GM12878 (cell line): ENCODE measurements at regions of chr21 and their contacts with region 1.

Region 1: DNA sequence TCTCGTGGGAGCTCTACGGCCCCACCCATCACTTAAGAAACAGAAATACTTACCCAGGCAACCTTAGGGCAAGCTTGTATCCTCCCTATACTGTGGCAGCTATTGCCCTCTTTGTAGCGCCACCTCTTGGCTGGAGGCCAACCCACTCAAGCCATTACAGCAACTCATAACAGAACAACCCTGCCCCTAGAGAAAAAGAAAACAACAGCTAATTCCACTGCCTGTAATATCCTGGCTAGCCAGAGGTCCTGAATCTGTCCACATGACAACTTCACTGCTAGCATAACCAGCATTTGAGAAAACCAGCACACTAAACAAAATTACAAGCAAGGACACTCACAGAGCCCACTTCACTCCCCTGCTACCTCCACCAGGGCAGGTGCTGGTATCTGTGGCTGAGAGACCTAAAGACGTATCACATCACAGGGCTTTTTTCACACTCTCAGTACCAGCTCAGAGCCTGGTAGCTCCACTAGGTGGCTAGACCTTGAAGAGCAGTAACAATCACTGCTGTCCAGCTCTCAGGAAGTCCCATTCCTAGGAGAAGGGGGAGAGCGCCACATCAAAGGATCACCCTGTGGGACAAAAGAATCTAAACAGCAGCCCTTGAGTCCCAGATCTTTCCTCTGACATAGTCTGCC is 14.5 kb upstream of the MX1 start:
- DNase-seq: peak; percentile 40
- ATAC-seq: peak; percentile 95
- H3K4me3 ChIP-seq: no peak overlapping the region
- H3K27ac ChIP-seq: no peak overlapping the region
- H3K4me1 ChIP-seq: no peaks in the 10 kb centered on the region; the same call in 1 of the 2 replicates
- H3K27me3 ChIP-seq: no peaks in the 10 kb centered on the region
- CTCF ChIP-seq: peak; percentile 14 to 34 (median 19); a peak in 3 of 6 replicates
- EP300 ChIP-seq: no peak
- POLR2A ChIP-seq: no peak
- RAD21 ChIP-seq: no peak

Region 2: DNA sequence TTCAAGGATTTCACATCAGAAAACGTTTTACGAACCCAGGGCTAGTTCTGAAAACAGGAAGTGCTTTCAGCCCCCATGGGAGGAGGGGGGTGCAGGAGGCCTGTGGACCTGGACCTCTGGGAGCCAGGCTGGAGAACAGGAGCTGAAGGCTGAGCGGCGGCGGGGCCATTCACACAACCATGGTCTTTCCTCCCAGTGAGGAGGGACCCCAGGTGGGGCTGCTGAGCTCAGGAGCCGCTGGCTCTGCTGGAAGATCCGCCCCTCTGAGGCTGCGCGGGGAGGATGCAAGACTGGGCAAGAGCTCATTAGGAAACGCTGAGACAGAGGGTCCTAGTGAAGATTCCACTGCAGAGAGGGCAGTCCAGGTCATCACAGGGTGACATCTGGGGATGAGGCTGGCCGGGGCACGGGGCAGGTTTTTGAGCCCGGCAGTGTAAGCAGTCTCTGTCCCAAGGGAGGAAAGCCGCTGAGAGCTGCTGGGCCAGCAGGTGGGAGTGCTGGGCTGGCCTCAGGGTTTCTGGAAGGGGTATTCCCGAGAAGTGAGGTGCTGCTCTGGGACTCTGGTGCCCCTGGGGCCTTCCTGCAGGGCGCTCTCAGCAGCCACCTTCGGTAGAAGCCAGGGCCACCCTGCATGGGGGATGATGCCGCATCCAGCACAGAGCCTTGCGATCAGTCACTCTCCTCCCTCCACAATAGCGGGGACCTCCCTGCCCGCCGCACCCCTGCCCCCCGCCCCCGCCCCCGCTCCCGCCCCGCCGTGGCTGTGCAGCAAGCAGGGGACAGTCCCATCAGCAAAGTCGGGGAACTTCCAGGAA is 42.3 kb before region 1 on chr21:
- CTCF ChIA-PET with region 1: interaction called, 20 read pairs
- POLR2A ChIA-PET with region 1: interaction called, 5 read pairs
- RAD21 ChIA-PET with region 1: interaction called, 42 read pairs
- SMC1A ChIA-PET with region 1: interaction called, 62 read pairs
- in situ Hi-C with region 1: no loop called
- intact Hi-C with region 1: no loop called
- DNase-seq: peak; percentile 42
- ATAC-seq: peak; percentile 47
- H3K4me3 ChIP-seq: peak overlapping the region; percentile 78
- H3K27ac ChIP-seq: peak overlapping the region; percentile 98
- H3K4me1 ChIP-seq: peaks cover 42% of the 10 kb centered on the region
- H3K27me3 ChIP-seq: no peaks in the 10 kb centered on the region
- CTCF ChIP-seq: peak; percentile 24 to 60 (median 25); a peak in 4 of 6 replicates
- EP300 ChIP-seq: no peak
- POLR2A ChIP-seq: peak; percentile 70
- RAD21 ChIP-seq: peak; percentile 41

Region 3: GRCh38 chr21:41374867-41375533 is 36.6 kb before region 1 on chr21:
- CTCF ChIA-PET with region 1: interaction called, 20 read pairs
- POLR2A ChIA-PET with region 1: interaction called, 5 read pairs
- RAD21 ChIA-PET with region 1: interaction called, 42 read pairs
- SMC1A ChIA-PET with region 1: interaction called, 62 read pairs
- in situ Hi-C with region 1: no loop called
- intact Hi-C with region 1: no loop called
- DNase-seq: no peak
- ATAC-seq: peak; percentile 52
- H3K4me3 ChIP-seq: no peak overlapping the region
- H3K27ac ChIP-seq: no peak overlapping the region
- H3K4me1 ChIP-seq: peaks cover 6% of the 10 kb centered on the region; the same call in 1 of the 2 replicates
- H3K27me3 ChIP-seq: no peaks in the 10 kb centered on the region
- CTCF ChIP-seq: no peak
- EP300 ChIP-seq: no peak
- POLR2A ChIP-seq: no peak
- RAD21 ChIP-seq: no peak

Region 4: GRCh38 chr21:41425954-41426675 is 14.5 kb after region 1 on chr21 and contains the start of gene MX1:
- CTCF ChIA-PET with region 1: interaction called, 45 read pairs
- POLR2A ChIA-PET with region 1: interaction called, 16 read pairs
- RAD21 ChIA-PET with region 1: interaction called, 8 read pairs
- SMC1A ChIA-PET with region 1: interaction called, 21 read pairs
- in situ Hi-C with region 1: no loop called
- intact Hi-C with region 1: no loop called
- DNase-seq: peak; percentile 61
- ATAC-seq: peak; percentile 87
- H3K4me3 ChIP-seq: peak within 1 kb of the TSS; percentile 93
- H3K27ac ChIP-seq: peak within 1 kb of the TSS; percentile 100
- H3K4me1 ChIP-seq: peaks cover 44% of the 10 kb centered on the region
- H3K27me3 ChIP-seq: no peaks in the 10 kb centered on the region
- CTCF ChIP-seq: no peak
- EP300 ChIP-seq: no peak
- POLR2A ChIP-seq: peak; percentile 93
- RAD21 ChIP-seq: no peak
- polyA plus RNA-seq, gene MX1: 75.9 to 90.9 TPM

Region 5: DNA sequence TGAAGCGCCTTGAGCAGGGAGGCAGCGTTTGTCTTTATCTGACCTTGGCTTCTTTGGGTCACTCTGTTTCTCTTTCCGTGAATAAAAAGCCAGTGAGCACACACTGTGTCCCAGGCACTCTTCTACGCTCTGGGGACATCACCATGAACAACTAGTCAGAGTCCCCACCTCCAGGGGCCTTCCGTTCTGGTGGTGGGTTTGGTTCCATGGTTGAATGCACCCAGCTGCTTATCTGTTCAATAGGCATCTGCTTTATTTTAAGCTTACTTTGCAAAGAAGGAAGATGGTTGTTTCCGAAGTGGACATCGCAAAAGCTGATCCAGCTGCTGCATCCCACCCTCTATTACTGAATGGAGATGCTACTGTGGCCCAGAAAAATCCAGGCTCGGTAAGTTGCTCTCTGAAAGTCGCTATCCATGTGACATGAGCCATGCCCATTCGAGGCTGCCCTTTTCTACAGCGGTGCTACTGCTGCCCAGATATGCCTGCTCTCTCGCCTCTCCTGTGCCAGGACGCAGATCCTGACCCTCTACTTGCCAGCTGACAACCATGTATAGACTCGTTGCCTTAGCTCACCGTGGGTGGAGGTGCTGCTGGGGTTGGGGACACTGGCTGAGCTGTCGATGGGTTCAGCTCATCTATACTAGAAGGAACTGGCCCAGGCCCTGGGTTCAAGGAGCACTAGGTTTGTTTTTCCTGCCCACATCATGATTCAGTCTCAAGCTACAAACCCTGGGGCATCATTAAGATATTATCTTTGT is 20.4 kb after region 1 on chr21:
- CTCF ChIA-PET with region 1: interaction called, 45 read pairs
- POLR2A ChIA-PET with region 1: no interaction called
- RAD21 ChIA-PET with region 1: interaction called, 4 read pairs
- SMC1A ChIA-PET with region 1: interaction called, 4 read pairs
- in situ Hi-C with region 1: no loop called
- intact Hi-C with region 1: no loop called
- DNase-seq: peak; percentile 56
- ATAC-seq: peak; percentile 68
- H3K4me3 ChIP-seq: no peak overlapping the region
- H3K27ac ChIP-seq: peak overlapping the region; percentile 22; the same call in 1 of the 2 replicates
- H3K4me1 ChIP-seq: peaks cover 39% of the 10 kb centered on the region
- H3K27me3 ChIP-seq: no peaks in the 10 kb centered on the region
- CTCF ChIP-seq: no peak
- EP300 ChIP-seq: peak in 1 of 2 experiments; percentile 29; a peak in 1 of 4 replicates
- POLR2A ChIP-seq: peak; percentile 67
- RAD21 ChIP-seq: no peak

Region 6: DNA sequence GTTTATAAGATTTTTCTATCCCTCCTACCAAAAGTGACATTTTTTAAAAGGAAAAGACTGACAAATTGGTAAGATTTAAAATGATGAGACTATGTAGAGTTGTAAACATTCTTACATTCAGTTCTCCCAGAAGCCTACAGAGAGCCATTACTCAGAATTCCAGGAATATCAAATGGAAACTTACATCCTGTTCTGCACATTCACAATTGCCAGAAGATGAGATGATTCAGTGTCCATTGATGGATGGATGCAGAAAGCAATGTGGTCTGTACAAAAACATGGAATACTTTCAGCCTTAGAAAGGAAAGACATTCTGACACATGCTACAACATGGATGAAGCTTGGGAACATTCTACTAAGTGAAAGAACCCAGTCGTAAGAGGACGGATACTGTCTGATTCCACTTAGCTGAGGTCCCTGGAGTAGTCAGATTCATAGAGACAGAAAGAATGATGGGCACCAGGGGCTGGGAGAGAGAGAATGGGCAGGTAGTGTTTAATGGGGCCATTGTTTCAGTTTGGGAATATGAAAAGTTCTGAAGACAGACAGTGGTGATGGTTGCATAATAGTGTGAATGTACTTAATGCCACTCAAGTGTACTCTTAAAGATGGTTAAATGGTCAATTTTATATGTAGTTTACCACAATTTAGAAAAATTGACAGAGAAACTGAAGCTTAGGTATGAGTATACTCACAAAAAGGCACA is 31.1 kb after region 1 on chr21:
- CTCF ChIA-PET with region 1: interaction called, 12 read pairs
- POLR2A ChIA-PET with region 1: no interaction called
- RAD21 ChIA-PET with region 1: no interaction called
- SMC1A ChIA-PET with region 1: interaction called, 4 read pairs
- in situ Hi-C with region 1: no loop called
- intact Hi-C with region 1: no loop called
- DNase-seq: no peak
- ATAC-seq: no peak
- H3K4me3 ChIP-seq: no peak overlapping the region
- H3K27ac ChIP-seq: no peak overlapping the region
- H3K4me1 ChIP-seq: no peaks in the 10 kb centered on the region
- H3K27me3 ChIP-seq: no peaks in the 10 kb centered on the region
- CTCF ChIP-seq: no peak
- EP300 ChIP-seq: no peak
- POLR2A ChIP-seq: 0 out of 2 replicates have a peak, but pooled peaks have one; percentile 36
- RAD21 ChIP-seq: no peak